MCF 10A (cell line): ENCODE measurements at regions of chr6 and their contacts with region 1.

Region 1: DNA sequence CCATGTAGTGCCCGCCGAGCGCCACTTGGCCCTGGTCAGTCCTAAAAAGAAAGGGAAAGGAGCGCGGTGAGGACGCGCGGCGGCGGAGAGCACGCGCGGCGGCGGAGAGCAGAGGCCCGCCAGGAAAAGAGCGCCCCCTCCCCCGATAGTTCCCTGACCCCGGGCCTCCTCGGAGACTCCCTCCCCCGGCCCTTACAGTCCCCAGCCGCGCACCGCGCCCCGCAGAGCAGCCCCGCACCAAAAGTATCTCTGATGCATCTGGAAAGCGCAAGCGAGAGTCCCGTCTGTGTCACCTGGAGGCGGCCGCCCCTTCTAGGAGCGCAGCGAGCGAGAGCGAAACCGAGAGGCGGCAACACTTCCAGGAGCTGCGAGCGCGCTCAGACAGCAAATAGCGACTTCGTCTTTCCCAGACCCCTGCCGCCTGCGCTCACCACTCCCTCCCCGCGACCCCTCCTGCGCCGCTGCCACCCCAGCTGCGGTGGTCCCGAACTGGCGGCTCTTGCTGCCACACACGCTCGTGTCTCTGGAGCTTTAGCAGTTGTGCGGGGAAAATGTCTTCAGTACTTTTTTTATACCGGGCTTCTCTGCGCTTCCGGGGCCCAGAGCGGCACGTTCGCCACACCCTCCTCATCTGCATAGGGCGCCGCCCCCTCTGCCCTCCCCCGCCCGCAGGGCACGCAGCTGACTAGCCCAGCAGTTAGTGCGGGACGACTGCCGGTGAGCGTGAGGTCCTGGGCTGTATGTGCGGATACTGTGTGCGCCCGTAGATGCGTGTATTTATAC is at the start of gene TENT5A:
- DNase-seq: peak; percentile 90
- H3K4me3 Mint-ChIP-seq: peak within 1 kb of the TSS; percentile 98
- H3K27ac Mint-ChIP-seq: peak within 1 kb of the TSS; percentile 88
- H3K4me1 Mint-ChIP-seq: peaks cover 18% of the 10 kb centered on the region
- H3K27me3 Mint-ChIP-seq: no peaks in the 10 kb centered on the region
- CTCF ChIP-seq: no peak
- total RNA-seq, gene TENT5A: 2.5 and 3.9 TPM in 2 replicates

Region 2: GRCh38 chr6:80605165-80605989 is 1147.0 kb before region 1 on chr6:
- CTCF ChIA-PET with region 1: interaction called, 3 read pairs
- POLR2A ChIA-PET with region 1: interaction called, 4 read pairs
- intact Hi-C with region 1: loop called (anchors 5 kb)
- DNase-seq: peak; percentile 68
- H3K4me3 Mint-ChIP-seq: no peak overlapping the region
- H3K27ac Mint-ChIP-seq: peak overlapping the region; percentile 39
- H3K4me1 Mint-ChIP-seq: peaks cover 26% of the 10 kb centered on the region
- H3K27me3 Mint-ChIP-seq: no peaks in the 10 kb centered on the region
- CTCF ChIP-seq: peak; percentile 57

Region 3: GRCh38 chr6:81766482-81767069 is 14.2 kb after region 1 on chr6:
- CTCF ChIA-PET with region 1: interaction called, 4 read pairs
- POLR2A ChIA-PET with region 1: interaction called, 54 read pairs
- intact Hi-C with region 1: no loop called
- DNase-seq: peak; percentile 94
- H3K4me3 Mint-ChIP-seq: peak overlapping the region; percentile 0
- H3K27ac Mint-ChIP-seq: peak overlapping the region; percentile 8
- H3K4me1 Mint-ChIP-seq: peaks cover 26% of the 10 kb centered on the region
- H3K27me3 Mint-ChIP-seq: no peaks in the 10 kb centered on the region
- CTCF ChIP-seq: no peak

Region 4: DNA sequence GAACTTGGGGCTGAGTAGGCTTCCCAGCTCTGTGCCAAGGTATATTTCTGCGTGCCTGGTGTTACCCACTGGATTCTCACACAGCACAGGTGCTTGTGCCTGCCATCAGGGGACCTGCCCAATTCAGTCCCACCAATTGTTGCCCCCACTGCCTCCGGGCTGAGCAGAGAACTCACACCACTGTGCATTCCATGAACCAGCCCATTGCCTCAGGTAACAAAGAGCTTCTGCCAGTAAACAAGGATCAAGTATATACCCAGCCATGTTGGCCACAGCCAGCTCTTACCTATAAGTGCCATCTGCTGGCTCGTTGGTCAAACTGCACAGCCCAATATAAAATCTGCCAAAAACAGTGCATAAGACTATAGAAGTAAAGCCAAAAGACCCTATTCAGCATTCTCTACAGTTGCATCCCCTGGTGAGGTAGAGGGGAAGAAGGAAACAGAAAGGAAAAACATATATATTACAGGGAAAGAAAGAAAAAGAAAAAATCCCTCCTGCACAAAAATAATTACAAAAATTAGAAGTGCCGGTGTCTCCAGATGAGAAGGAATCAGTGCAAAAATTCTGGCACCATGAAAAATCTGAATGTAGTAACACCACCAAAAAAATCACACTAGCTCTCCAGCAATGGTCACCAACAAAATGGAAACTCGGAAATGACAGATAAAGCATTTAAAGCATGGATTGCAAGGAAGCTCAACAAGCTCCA is 253.9 kb after region 1 on chr6:
- CTCF ChIA-PET with region 1: interaction called, 42 read pairs
- POLR2A ChIA-PET with region 1: interaction called, 19 read pairs
- intact Hi-C with region 1: loop called (anchors 1 kb)
- DNase-seq: peak; percentile 51
- H3K4me3 Mint-ChIP-seq: no peak overlapping the region
- H3K27ac Mint-ChIP-seq: no peak overlapping the region
- H3K4me1 Mint-ChIP-seq: no peaks in the 10 kb centered on the region
- H3K27me3 Mint-ChIP-seq: no peaks in the 10 kb centered on the region
- CTCF ChIP-seq: peak; percentile 47

Region 5: DNA sequence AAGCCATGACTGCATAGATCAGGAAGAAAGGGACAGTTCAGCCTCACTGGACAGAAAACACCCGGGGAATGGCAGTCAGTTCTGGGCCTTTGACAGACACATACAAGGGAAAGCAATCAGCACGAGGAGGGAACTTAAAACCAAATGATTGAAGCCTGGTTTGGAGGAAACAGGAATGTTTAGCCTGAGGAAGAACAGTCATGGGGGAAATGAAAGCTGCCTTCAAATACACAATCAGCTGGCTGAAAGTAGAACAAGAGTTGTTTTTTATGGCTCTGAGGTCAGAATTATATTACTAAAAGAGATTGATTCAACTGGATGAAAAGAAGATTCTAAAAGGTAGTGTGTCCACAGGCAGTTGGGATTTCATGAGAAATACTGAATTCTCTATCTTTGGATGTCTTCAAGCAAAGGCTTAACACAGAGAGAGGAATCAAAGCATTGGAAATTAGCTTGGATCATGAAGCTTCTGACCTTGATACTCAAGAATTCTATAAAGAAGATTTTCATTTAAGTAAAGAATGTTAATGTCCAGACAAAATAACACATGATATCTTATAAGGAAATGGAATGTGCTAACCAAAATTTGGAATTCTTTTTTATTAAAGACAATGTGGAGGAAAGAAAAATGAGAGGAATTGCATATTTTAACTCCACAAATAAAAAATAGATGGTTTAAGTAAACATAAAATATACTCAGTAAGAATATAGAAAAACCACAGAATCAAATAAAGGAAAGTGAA is 278.6 kb after region 1 on chr6:
- CTCF ChIA-PET with region 1: interaction called, 4 read pairs
- POLR2A ChIA-PET with region 1: interaction called, 10 read pairs
- intact Hi-C with region 1: no loop called
- DNase-seq: no peak
- H3K4me3 Mint-ChIP-seq: no peak overlapping the region
- H3K27ac Mint-ChIP-seq: peak overlapping the region; percentile 61
- H3K4me1 Mint-ChIP-seq: peaks cover 15% of the 10 kb centered on the region
- H3K27me3 Mint-ChIP-seq: no peaks in the 10 kb centered on the region
- CTCF ChIP-seq: no peak